Gastrocnemius medialis (tissue), 4 donors: ENCODE measurements at regions of chr4 and their contacts with region 1.

Region 1: DNA sequence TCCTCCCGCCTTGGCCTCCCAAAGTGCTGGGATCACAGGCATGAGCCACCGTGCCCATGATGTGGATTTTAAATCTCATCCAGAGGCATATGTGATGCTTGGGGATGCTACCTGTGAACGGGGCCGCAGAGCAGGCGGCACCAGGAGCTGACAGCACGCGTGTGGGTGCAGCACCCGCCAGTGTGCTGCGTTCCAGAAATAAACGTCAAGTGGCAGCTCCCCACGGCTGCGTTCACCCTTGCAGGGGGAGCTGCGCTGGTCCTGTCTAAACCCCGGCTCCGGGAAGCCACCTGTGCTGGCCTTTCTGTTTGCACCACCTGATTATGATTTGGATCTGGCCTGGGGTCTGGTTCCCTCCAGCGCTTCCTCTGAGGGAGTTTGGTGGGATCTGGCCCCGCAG is 77.8 kb downstream of the SORCS2 start:
- DNase-seq: no peak
- ATAC-seq: no peak
- H3K4me3 ChIP-seq: no peak overlapping the region
- H3K27ac ChIP-seq: no peak overlapping the region
- H3K4me1 ChIP-seq: no peaks in the 10 kb centered on the region
- H3K27me3 ChIP-seq: no peaks in the 10 kb centered on the region
- CTCF ChIP-seq: no peak
- POLR2A ChIP-seq: no peak

Region 2: DNA sequence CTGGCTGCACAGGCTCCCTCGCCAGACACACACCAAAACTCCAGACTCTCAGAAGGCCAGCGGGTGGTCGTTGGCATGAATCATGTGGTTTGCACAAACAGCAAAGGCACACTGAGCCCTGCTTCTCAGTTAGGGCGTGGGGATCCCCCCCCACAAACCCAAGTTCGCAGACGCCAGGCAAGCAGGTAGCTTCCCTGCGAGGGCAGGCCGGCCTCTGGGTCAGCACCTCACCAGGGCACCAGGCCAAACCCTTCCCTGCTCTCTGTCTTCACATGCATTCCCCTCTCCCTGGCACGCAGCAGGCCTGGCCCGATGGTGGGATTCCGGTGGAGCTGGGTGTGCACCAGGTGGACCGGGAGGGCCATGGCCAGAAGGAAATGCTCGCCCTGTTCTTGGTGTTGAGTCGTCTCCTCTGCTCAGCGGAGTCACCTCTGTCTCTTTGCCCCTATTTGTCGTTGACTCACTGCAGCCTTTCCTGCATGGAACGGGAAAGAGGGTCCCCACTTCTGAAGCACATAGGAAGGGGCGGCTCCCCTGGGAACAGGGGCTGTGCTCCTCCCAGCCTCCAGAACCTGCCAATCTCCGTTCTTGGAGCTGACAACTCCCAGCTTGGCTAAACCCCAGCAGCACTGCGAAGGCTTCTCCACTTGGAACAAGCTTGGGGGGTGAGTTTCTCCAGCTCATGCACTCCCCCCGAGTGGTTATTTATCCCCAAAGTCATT is 26.4 kb before region 1 on chr4:
- in situ Hi-C with region 1: no loop called
- intact Hi-C with region 1: loop called (anchors 1 kb)
- DNase-seq: no peak
- ATAC-seq: no peak
- H3K4me3 ChIP-seq: no peak overlapping the region
- H3K27ac ChIP-seq: no peak overlapping the region
- H3K4me1 ChIP-seq: peaks cover 0 to 10% of the 10 kb centered on the region in 2 donors
- H3K27me3 ChIP-seq: no peaks in the 10 kb centered on the region
- CTCF ChIP-seq: no peak
- POLR2A ChIP-seq: no peak